ENCODE measurements at regions of chr20 and their contacts with region 1.

Region 1: DNA sequence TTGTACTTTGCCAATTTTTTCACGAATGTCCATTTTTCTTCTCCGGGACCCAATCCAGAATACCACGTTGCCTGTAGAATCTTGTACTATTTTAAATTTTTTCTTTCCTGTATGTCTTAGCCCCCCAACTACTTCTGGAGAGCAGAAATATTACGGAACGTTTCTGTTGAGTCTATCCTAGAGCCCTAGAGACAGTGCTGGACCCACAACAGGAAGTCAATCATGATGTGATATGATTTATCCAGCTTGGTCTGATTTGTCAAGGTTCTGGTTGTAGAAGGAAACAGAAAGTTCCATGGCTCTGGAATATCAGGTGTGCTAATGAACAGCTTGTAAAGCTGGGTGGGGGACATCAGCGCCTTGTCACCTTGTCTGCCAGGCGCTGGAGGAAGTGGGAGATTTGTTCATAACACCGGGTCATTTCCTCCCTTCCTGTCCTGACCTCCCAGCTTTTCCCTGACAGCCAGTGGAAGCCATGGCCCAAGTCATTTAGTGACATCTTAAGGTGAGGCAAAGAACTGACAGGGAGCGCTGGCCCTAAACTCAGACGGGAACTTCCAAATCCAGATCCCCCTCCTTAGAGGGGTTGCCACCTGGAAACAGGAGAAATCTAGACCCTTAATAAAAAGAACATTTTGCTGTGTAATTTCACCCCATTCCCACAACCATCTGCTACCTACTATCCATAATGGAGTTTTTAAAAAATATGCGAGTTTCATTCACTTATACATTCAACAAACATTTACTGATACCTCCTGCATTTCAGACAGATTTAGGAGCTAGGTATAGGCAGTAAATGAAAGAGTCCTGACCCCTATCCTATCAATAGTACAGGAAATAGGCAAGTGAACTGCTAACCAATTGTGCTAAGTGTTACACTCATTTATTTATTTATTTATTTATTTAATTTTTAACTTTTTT is 130.5 kb downstream of the ZFP64 start:
- DNase-seq: no peak
- ATAC-seq: peak in 3 of 4 donors; percentile 44 to 71 (median 51)
- H3K4me3 ChIP-seq: peak overlapping the region in 2 of 12 donors; percentile 5 to 18
- H3K27ac ChIP-seq: no peak overlapping the region
- H3K4me1 ChIP-seq: peaks cover 0 to 6% (median 0%) of the 10 kb centered on the region in 12 donors
- H3K27me3 ChIP-seq: no peaks in the 10 kb centered on the region
- CTCF ChIP-seq: peak in 10 of 12 donors; percentile 7 to 51 (median 36)
- POLR2A ChIP-seq: no peak

Region 2: GRCh38 chr20:51800060-51800794 is 260.8 kb before region 1 on chr20:
- intact Hi-C with region 1: loop called in 3 of 10 experiments (anchors 10 kb)
- DNase-seq: peak; percentile 27 to 75 (median 44)
- ATAC-seq: peak in 3 of 4 donors; percentile 49 to 61 (median 61)
- H3K4me3 ChIP-seq: peak overlapping the region in 11 of 12 donors; percentile 17 to 60 (median 51)
- H3K27ac ChIP-seq: no peak overlapping the region
- H3K4me1 ChIP-seq: peaks cover 0 to 24% (median 14%) of the 10 kb centered on the region in 12 donors
- H3K27me3 ChIP-seq: peaks cover 22 to 71% (median 36%) of the 10 kb centered on the region in 9 donors
- CTCF ChIP-seq: peak; percentile 54 to 83 (median 76)
- POLR2A ChIP-seq: no peak

Region 3: DNA sequence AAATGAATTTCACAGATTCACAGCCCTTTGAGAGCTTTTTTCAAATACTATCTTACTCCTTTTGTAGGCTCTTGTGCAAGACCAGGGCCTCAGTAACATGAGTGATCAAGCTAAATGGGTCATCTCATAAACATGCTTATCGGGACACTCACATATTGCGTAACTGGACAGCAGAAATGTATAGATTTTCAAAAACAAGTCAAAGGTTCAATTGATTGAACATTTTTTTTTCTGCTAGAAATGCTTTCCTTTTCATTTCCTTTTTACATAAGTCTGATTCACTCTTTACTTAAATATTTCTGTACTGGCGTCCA is 250.1 kb before region 1 on chr20:
- intact Hi-C with region 1: loop called in 4 of 10 experiments (anchors 10 kb)
- DNase-seq: no peak
- ATAC-seq: no peak
- H3K4me3 ChIP-seq: no peak overlapping the region
- H3K27ac ChIP-seq: no peak overlapping the region
- H3K4me1 ChIP-seq: no peaks in the 10 kb centered on the region
- H3K27me3 ChIP-seq: no peaks in the 10 kb centered on the region
- CTCF ChIP-seq: no peak
- POLR2A ChIP-seq: no peak

Measured in heart left ventricle (tissue), 16 donors.